Caco-2 (cell line): ENCODE measurements at regions of chr5 and their contacts with region 1.

Region 1: DNA sequence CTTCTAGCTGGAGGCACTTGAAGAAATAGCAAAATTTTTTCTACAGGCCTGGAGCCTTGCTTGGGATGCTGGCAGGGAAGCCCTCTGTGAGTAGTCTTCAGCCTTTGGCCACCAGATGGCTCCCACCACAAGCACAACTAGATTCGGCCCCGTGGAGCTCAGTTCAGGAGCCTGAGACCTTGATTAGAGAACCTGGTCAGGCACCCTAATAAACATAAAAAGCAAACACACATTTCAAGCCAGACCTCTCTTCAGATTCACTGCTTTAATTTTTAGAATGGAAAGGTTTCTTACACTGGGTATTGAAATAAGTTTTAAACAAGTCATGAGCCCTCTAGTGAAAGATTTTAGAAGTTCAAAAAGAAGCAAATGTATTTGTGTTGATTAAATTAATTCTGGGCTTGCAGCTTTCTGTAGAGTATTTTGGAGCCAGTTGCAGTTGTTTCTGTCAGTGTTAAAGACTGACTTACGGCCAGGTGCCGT is 41.4 kb downstream of the GLRX start:
- DNase-seq: peak; percentile 82 to 84
- H3K4me3 ChIP-seq: no peak overlapping the region
- H3K4me3 Mint-ChIP-seq: no peak overlapping the region
- H3K27ac Mint-ChIP-seq: no peak overlapping the region
- H3K4me1 ChIP-seq: no peaks in the 10 kb centered on the region
- H3K4me1 Mint-ChIP-seq: no peaks in the 10 kb centered on the region
- H3K27me3 ChIP-seq: no peaks in the 10 kb centered on the region
- H3K27me3 Mint-ChIP-seq: no peaks in the 10 kb centered on the region
- CTCF ChIP-seq: peak; percentile 89 to 95

Region 2: DNA sequence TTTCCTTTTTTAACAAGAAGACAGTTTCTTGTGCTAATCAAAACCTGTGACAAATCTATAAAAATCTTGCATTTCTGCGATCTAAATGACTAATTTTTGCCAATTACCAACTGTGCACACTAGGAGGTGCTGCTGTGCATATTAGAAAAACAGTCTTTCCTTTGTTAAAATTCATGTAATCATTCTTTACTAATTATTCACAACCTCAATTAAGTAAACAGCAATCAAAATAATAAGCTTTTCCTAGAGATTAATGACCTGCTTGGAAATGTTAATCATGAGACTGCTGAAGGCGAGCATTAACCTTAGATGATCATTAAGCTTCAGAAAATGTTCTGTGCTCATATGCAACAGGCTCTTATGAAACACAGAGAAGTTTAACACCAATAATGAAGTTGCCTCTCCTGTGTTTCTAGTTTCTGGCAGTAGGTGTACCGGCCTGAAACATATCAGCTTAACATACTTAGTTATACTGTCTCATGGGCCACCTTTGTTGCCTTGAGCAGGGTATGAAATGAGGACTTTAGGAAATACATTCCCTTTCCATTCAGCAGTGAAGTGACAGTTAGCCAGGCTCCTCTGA is 116.8 kb before region 1 on chr5:
- CTCF ChIA-PET with region 1: no interaction called
- POLR2A ChIA-PET with region 1: no interaction called
- intact Hi-C with region 1: loop called (anchors 2 kb)
- DNase-seq: peak in 1 of 2 experiments; percentile 23
- H3K4me3 ChIP-seq: no peak overlapping the region
- H3K4me3 Mint-ChIP-seq: no peak overlapping the region
- H3K27ac Mint-ChIP-seq: no peak overlapping the region
- H3K4me1 ChIP-seq: 0 out of 2 replicates have a peak, but pooled peaks cover 4% of the 10 kb centered on the region
- H3K4me1 Mint-ChIP-seq: no peaks in the 10 kb centered on the region
- H3K27me3 ChIP-seq: no peaks in the 10 kb centered on the region
- H3K27me3 Mint-ChIP-seq: no peaks in the 10 kb centered on the region
- CTCF ChIP-seq: peak; percentile 78 to 81

Region 3: DNA sequence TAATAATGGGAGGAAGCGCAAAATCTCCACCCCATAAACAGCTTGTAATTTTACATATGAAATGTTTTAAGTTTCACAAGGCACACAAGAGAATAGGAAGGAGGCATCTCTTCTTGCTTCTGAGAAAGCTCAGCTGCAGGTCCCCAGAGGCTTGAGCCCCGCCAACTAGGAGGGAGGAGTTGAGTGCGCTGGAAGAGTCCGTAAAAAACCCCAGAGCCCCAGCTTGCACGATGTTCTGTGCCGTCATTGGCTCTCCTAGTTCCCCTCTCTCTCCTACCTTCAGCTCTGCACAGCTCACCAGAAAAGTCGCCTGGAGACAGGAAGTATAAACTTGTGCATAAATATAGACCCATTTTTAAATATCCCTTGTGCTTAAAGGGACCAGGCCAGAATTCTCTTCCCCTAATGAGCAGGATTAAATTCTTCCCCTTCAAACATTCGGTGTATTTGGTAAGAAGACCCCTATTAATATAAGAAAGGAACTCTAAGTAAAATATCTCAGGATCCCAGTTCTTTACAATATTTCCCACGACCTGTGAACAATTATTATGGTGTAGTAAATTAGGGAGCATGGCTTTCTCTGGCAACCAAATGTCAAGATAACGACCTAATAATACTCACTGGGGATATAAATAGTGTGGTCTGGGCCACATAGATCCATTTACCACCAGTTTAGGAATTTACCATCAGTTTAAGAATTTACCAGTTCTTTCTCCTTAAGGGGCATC is 27.7 kb after region 1 on chr5:
- CTCF ChIA-PET with region 1: interaction called, 10 read pairs
- POLR2A ChIA-PET with region 1: no interaction called
- intact Hi-C with region 1: no loop called
- DNase-seq: no peak
- H3K4me3 ChIP-seq: no peak overlapping the region
- H3K4me3 Mint-ChIP-seq: no peak overlapping the region
- H3K27ac Mint-ChIP-seq: no peak overlapping the region
- H3K4me1 ChIP-seq: peaks cover 47% of the 10 kb centered on the region
- H3K4me1 Mint-ChIP-seq: peaks cover 30% of the 10 kb centered on the region
- H3K27me3 ChIP-seq: no peaks in the 10 kb centered on the region
- H3K27me3 Mint-ChIP-seq: no peaks in the 10 kb centered on the region
- CTCF ChIP-seq: no peak

Region 4: DNA sequence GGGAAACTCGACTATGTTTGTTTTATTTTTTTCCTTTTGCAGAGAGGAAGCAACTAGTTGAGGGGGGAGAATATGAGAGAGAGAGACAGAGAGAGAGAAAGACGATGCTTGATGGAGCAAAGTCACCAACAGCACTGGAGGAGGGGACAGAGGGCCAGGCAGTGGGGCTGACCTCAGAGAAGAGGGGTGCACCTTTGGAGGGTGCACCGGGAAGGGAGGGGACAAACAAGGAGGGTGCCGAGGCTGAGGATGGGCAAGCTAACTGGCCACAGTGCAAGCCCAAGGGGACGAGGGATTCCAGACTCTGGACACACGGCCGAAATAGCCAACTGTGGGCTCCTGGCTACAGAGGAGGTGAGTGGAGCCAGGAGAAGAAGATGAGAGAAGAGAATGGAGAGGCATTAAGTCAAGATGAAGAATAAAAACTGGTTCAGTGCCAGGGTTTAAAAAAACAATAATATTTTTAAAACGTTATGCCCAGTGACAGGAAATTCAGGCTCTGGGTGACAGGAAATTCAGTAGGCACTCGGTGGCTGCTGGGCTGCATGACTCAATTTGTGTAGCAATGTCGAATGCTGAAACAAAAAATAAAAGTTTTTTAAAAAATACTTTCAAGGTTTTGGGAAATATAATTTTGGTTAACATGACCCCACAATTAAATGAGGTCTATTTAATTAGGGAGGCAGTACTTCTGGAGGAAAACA is 54.7 kb after region 1 on chr5:
- CTCF ChIA-PET with region 1: interaction called, 28 read pairs
- POLR2A ChIA-PET with region 1: no interaction called
- intact Hi-C with region 1: loop called (anchors 1 kb)
- DNase-seq: no peak
- H3K4me3 ChIP-seq: no peak overlapping the region
- H3K4me3 Mint-ChIP-seq: peak overlapping the region; percentile 77
- H3K27ac Mint-ChIP-seq: peak overlapping the region; percentile 87
- H3K4me1 ChIP-seq: no peaks in the 10 kb centered on the region
- H3K4me1 Mint-ChIP-seq: peaks cover 25% of the 10 kb centered on the region
- H3K27me3 ChIP-seq: no peaks in the 10 kb centered on the region
- H3K27me3 Mint-ChIP-seq: no peaks in the 10 kb centered on the region
- CTCF ChIP-seq: no peak

Region 5: DNA sequence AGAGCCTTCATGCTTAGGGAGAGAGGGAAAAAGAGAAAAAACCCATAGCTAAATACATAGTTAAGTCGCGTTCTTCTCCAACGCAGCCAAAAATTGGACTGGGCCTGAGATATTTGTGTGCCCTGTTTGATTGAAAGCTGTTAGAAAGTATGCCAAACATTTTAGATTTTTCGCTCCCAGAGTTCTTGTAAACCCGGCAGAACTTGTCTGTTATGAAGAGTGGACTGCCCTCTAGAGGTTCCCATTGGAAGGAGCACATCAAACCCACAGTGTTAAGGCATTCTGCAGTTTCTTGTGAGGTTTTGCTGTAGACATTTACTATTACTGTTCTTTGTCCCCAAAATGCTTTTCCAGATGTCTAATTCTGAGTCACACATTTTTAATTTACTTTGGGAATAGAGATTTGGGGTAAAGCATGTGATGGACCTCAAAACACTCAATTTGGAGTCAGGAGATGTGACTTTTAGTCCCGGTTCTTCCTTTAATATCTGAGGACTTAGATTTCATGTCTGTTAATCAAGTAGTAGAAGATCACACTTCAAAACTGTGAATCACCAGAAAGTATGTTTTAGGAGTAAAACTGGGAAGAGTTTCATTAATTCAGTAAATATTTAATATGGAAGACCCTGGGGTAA is 555.3 kb after region 1 on chr5:
- CTCF ChIA-PET with region 1: no interaction called
- POLR2A ChIA-PET with region 1: no interaction called
- intact Hi-C with region 1: loop called (anchors 2 kb)
- DNase-seq: peak; percentile 78 to 79
- H3K4me3 ChIP-seq: no peak overlapping the region
- H3K4me3 Mint-ChIP-seq: no peak overlapping the region
- H3K27ac Mint-ChIP-seq: no peak overlapping the region
- H3K4me1 ChIP-seq: peaks cover 40% of the 10 kb centered on the region
- H3K4me1 Mint-ChIP-seq: peaks cover 39% of the 10 kb centered on the region
- H3K27me3 ChIP-seq: no peaks in the 10 kb centered on the region
- H3K27me3 Mint-ChIP-seq: no peaks in the 10 kb centered on the region
- CTCF ChIP-seq: peak; percentile 84 to 93